Endothelial cell of umbilical vein (primary cell): ENCODE measurements at regions of chr7 and their contacts with region 1.

Region 1: DNA sequence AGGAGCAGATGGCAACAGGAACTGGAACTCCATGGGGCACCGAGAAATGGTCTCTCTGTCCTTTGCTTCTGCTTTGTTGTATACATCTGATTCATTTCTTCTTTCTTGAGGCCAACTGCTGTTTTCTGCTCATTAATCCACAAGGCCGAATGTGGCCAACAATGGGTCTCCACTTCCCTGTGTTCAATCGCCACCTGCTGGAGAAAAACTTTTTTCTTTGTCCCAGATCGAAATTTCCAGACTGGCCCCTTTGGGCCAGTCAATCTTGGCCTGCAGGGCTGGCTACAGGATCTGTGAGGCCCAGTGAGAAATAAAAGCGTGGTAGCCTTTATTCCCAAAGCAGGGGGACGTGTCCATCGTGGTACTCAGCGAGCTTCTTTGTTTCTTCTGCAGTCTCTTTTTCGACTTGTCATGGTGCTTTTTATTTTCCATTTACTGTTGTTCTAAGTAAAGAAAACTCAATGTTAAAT is 58.8 kb downstream of the PARP12 start:
- DNase-seq: peak; percentile 58
- H3K4me3 ChIP-seq: no peak overlapping the region
- H3K27ac ChIP-seq: no peak overlapping the region
- H3K4me1 ChIP-seq: no peaks in the 10 kb centered on the region
- H3K27me3 ChIP-seq: no peaks in the 10 kb centered on the region
- CTCF ChIP-seq: peak; percentile 51 to 60
- POLR2A ChIP-seq: no peak

Region 2: GRCh38 chr7:139431010-139431409 is 572.9 kb before region 1 on chr7:
- CTCF ChIA-PET with region 1: interaction called, 15 read pairs
- POLR2A ChIA-PET with region 1: no interaction called
- dilution Hi-C with region 1: no loop called
- intact Hi-C with region 1: loop called (anchors 1 kb)
- DNase-seq: no peak
- H3K4me3 ChIP-seq: no peak overlapping the region
- H3K27ac ChIP-seq: no peak overlapping the region
- H3K4me1 ChIP-seq: no peaks in the 10 kb centered on the region
- H3K27me3 ChIP-seq: no peaks in the 10 kb centered on the region
- CTCF ChIP-seq: no peak
- POLR2A ChIP-seq: no peak

Region 3: DNA sequence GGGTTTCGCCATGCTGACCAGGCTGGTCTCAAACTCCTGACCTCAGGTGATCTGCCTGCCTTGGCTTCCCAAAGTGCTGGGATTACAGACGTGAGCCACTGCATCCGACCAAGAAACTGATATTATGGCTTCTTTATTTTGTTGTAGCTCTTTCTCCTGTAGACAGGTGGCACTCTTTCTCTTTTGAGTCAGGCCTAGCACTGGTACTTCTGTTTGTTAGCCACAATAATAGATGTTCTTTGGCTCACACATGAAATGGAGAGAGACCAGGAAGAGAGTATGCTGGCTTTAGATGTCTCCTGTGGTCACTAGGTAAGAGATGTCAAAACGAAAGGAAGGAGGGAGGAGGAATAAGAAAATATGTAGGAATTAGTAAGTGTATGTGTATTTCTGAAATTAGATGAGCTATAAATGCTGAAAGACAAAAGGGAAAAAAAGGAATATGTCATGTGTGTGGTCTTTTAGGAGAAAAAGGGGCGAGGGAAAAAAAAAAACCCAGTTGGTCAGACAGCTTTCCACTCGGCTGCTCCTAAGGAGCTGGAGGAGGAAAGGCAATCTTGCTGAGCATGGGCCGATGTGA is 401.7 kb before region 1 on chr7:
- CTCF ChIA-PET with region 1: interaction called, 176 read pairs
- POLR2A ChIA-PET with region 1: no interaction called
- dilution Hi-C with region 1: loop called (anchors 25 kb)
- intact Hi-C with region 1: loop called (anchors 1 kb)
- DNase-seq: peak; percentile 49
- H3K4me3 ChIP-seq: no peak overlapping the region
- H3K27ac ChIP-seq: no peak overlapping the region
- H3K4me1 ChIP-seq: no peaks in the 10 kb centered on the region
- H3K27me3 ChIP-seq: no peaks in the 10 kb centered on the region
- CTCF ChIP-seq: peak; percentile 35 to 54
- POLR2A ChIP-seq: no peak

Region 4: DNA sequence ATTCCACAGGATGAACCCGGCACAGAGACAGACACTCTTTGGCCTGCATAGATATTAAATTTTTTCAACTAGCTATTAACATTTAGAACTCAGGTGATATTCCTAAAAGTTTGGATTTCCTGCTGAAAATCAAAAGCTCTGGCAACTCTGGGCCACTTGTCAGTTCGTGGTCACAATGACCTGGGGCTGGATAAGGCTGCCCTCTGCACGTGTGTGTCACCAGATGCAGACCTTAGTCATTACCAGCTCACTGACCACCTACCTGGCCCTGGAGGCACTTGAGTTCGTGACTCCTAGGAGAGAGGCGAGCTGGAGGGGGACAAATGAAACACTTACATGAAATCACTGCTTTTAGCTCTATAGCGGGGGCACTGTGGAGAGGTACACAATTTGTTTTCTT is 352.6 kb before region 1 on chr7:
- CTCF ChIA-PET with region 1: interaction called, 233 read pairs
- POLR2A ChIA-PET with region 1: no interaction called
- dilution Hi-C with region 1: no loop called
- intact Hi-C with region 1: loop called (anchors 1 kb)
- DNase-seq: peak; percentile 30
- H3K4me3 ChIP-seq: no peak overlapping the region
- H3K27ac ChIP-seq: no peak overlapping the region
- H3K4me1 ChIP-seq: peaks cover 43% of the 10 kb centered on the region
- H3K27me3 ChIP-seq: no peaks in the 10 kb centered on the region
- CTCF ChIP-seq: no peak
- POLR2A ChIP-seq: no peak

Region 5: DNA sequence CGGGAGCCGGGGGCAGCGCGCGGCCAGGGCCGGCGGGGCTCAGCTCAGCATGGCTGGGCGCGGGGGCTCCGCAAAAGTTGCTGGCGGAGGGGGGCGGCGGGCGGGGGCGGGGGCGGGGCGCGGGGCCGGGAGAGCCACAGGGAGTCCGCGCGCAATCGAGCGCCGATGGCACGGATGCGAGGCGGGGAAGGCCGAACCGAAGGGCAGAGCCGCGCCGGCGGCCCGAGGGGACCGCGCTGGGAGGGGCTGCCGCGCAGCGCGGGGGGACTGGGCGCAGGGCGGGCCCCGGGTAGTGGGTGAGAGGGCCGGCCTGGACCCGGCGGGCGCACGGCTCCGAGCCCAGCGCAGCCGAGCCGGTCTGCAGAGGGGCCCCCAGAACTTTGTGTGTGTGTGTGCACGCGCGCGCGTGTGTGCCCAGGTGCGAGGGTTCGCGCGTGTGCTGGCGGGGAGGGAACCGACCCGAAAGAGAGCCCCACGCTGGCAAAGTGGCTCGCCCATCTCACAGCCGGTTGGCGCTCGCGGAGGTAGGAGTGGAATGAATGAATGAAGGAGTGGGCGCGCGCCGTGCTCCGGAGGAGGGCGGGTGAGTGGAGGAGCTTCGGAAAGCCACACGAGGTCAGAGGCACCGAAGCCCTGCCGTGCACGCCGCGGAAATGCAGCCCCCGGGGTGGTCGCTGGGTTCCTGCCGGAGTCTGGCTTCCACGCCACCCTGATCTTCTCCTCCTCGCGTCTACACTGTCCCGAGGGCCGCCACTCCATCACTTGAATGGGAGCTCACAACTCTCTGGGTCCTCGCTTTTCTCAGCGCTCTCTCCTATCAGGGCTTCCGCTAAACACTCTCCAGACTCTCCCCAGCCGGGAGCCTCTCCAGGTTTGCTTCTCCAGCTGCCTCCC is 225.8 kb before region 1 on chr7 and contains the start of gene HIPK2:
- CTCF ChIA-PET with region 1: interaction called, 17 read pairs
- POLR2A ChIA-PET with region 1: interaction called, 7 read pairs
- dilution Hi-C with region 1: no loop called
- intact Hi-C with region 1: loop called (anchors 1 kb)
- DNase-seq: peak; percentile 51
- H3K4me3 ChIP-seq: peak within 1 kb of the TSS; percentile 70 to 99 (median 96)
- H3K27ac ChIP-seq: peak within 1 kb of the TSS; percentile 74
- H3K4me1 ChIP-seq: peaks cover 23% of the 10 kb centered on the region
- H3K27me3 ChIP-seq: no peaks in the 10 kb centered on the region
- CTCF ChIP-seq: no peak
- POLR2A ChIP-seq: no peak
- total RNA-seq, gene HIPK2: 40.3 and 43.8 TPM in 2 replicates

Region 6: GRCh38 chr7:140062528-140063299 is 58.8 kb after region 1 on chr7 and contains the start of gene PARP12:
- CTCF ChIA-PET with region 1: interaction called, 9 read pairs
- POLR2A ChIA-PET with region 1: no interaction called
- dilution Hi-C with region 1: no loop called
- intact Hi-C with region 1: loop called (anchors 2 kb)
- DNase-seq: peak; percentile 85
- H3K4me3 ChIP-seq: peak within 1 kb of the TSS; percentile 53 to 77 (median 71)
- H3K27ac ChIP-seq: peak within 1 kb of the TSS; percentile 84
- H3K4me1 ChIP-seq: peaks cover 36% of the 10 kb centered on the region
- H3K27me3 ChIP-seq: no peaks in the 10 kb centered on the region
- CTCF ChIP-seq: no peak
- POLR2A ChIP-seq: peak; percentile 64
- total RNA-seq, gene PARP12: 52.2 and 65.4 TPM in 2 replicates

Region 7: DNA sequence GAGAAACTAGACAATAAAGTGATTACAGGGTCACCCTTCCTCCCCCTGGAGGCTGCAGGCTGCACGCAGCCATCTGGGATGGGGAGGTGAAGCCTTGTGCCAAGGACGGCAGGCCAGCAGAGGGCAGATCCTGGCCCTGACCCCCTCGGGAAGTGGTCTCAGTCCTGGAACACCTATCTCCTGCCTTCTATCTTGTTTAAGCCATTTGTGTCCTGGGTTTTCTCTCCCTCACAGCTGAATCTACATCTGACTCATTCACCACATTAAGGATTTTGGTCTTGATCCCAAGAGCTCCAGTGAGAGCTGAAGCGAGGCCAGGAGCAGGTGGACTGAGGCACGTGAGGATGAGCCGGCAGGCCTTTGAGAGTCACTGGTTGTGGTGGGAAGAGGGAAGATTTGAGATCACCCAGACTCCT is 75.2 kb after region 1 on chr7:
- CTCF ChIA-PET with region 1: no interaction called
- POLR2A ChIA-PET with region 1: no interaction called
- dilution Hi-C with region 1: no loop called
- intact Hi-C with region 1: no loop called
- DNase-seq: peak; percentile 22
- H3K4me3 ChIP-seq: no peak overlapping the region
- H3K27ac ChIP-seq: no peak overlapping the region
- H3K4me1 ChIP-seq: no peaks in the 10 kb centered on the region
- H3K27me3 ChIP-seq: peaks cover 0 to 4% of the 10 kb centered on the region in 2 experiments
- CTCF ChIP-seq: peak in 1 of 2 donors; percentile 49
- POLR2A ChIP-seq: no peak

Region 8: GRCh38 chr7:140435252-140435895 is 431.4 kb after region 1 on chr7:
- CTCF ChIA-PET with region 1: no interaction called
- POLR2A ChIA-PET with region 1: no interaction called
- dilution Hi-C with region 1: no loop called
- intact Hi-C with region 1: no loop called
- DNase-seq: no peak
- H3K4me3 ChIP-seq: no peak overlapping the region
- H3K27ac ChIP-seq: no peak overlapping the region
- H3K4me1 ChIP-seq: no peaks in the 10 kb centered on the region
- H3K27me3 ChIP-seq: peaks cover 0 to 2% of the 10 kb centered on the region in 2 experiments
- CTCF ChIP-seq: no peak
- POLR2A ChIP-seq: no peak